ENCODE measurements at regions of chr7 and their contacts with region 1.

Region 1: DNA sequence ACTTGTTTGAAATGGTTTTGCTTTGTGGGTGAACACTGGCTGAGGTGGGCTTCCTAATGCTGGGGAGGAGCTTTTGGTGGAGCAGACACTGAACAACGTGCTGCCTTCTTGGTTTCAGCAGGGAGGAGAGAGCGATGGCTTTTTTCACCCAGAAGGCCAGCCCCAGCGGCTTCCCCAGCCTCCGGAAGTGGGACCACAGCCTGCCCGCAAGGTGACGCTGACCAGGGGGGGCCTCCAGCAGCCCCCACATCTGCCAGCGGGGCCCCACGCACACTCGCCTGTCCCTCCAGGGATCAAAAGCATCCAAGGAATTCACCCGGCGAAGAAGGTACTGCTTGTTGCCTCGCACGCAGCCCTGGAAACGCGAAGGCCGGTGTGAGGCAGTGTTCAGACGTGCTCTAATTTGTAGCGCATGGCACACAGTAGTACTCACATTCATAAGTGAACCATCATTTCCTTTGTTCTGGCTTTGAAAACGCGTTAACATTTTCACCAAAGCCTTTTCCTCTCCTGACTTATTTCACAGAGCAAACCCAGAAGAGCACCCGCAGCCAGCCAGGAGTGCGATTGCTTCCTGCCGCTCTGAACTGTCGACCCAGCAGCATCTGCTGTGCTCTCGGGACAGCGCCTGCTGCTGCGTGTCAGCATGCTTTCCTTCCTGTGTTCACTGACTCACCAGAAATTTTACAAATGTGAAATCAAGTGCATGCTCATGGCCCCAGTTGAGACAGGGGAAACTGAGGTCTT is 48.4 kb downstream of the SHH start:
- DNase-seq: peak in 1 of 4 donors; percentile 33
- ATAC-seq: peak; percentile 41
- H3K4me3 ChIP-seq: no peak overlapping the region
- H3K27ac ChIP-seq: no peak overlapping the region
- H3K4me1 ChIP-seq: no peaks in the 10 kb centered on the region
- H3K27me3 ChIP-seq: no peaks in the 10 kb centered on the region
- CTCF ChIP-seq: no peak
- POLR2A ChIP-seq: no peak

Region 2: DNA sequence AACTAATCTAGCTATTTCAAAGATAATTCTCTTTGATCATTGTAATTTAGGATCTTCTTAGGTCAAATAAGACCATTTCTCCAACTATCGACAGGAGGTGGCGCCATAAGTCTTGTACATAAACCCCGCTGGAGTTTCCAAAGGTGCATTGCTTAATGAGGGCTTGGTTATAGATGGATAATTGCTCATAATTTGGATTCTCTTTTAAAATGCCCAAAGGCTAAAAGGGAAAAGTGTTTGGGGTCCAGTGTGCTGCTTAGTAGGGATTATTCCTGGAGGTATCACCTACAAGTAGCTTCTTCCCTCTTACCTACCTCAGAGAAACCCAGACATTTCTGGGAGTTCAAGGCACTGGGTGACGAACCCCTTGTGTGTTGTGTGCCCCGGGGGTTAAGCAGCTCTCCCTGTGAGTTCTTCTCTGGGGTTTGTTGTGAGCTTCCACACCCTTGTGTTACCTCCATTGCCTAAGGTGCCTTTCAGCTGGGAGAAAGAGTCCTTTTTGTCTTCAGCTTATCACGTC is 836.2 kb before region 1 on chr7:
- intact Hi-C with region 1: loop called (anchors 10 kb)
- DNase-seq: peak; percentile 85 to 92 (median 89)
- ATAC-seq: peak; percentile 77
- H3K4me3 ChIP-seq: peak overlapping the region; percentile 20 to 67
- H3K27ac ChIP-seq: peak overlapping the region; percentile 59 to 85 (median 82)
- H3K4me1 ChIP-seq: peaks cover 7% of the 10 kb centered on the region
- H3K27me3 ChIP-seq: no peaks in the 10 kb centered on the region
- CTCF ChIP-seq: peak; percentile 19 to 76 (median 67)
- POLR2A ChIP-seq: no peak

Region 3: GRCh38 chr7:155380221-155380861 is 383.5 kb before region 1 on chr7:
- intact Hi-C with region 1: loop called (anchors 10 kb)
- DNase-seq: peak; percentile 80 to 84 (median 82)
- ATAC-seq: peak; percentile 90
- H3K4me3 ChIP-seq: no peak overlapping the region
- H3K27ac ChIP-seq: no peak overlapping the region
- H3K4me1 ChIP-seq: peaks cover 44% of the 10 kb centered on the region
- H3K27me3 ChIP-seq: peaks cover 4 to 58% of the 10 kb centered on the region in 2 donors
- CTCF ChIP-seq: peak; percentile 61 to 82 (median 78)
- POLR2A ChIP-seq: no peak

Region 4: DNA sequence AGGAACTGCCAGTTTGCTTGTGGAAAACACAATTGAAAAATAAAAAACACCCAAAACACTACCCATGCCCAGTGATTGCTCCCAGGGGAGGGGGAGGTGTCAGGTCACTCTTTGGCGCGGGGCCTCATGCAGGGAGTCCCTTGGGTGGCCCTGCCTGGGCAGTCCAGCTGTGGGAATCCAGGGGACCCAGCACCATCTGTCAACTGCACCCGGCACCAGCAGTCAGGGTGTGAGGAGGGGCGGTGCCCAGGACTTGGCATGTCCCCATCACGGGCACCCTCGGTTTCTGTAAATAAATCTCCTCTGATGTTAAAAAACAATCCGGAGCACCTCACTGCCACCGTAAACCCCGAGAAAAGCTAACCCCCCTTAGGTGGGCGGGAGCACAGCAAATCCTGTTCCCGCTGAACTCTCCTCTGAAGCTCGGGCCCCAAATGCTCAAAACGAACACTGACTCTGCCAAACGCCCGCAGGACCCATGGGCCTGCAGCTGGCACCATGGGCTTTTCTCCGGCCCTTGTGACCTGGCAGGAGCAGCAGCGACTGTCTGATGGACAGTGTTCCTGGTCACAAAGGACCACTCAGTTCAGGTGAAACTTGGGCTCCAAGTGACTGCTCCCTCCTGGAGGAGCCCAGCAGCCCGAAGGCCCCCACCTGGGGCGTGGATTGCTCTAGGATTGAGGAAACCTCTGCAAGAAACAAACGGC is 324.4 kb before region 1 on chr7:
- intact Hi-C with region 1: no loop called
- DNase-seq: peak in 1 of 4 donors; percentile 17
- ATAC-seq: no peak
- H3K4me3 ChIP-seq: no peak overlapping the region
- H3K27ac ChIP-seq: no peak overlapping the region
- H3K4me1 ChIP-seq: no peaks in the 10 kb centered on the region
- H3K27me3 ChIP-seq: peaks cover 0 to 4% of the 10 kb centered on the region in 2 donors
- CTCF ChIP-seq: no peak
- POLR2A ChIP-seq: no peak

Region 5: DNA sequence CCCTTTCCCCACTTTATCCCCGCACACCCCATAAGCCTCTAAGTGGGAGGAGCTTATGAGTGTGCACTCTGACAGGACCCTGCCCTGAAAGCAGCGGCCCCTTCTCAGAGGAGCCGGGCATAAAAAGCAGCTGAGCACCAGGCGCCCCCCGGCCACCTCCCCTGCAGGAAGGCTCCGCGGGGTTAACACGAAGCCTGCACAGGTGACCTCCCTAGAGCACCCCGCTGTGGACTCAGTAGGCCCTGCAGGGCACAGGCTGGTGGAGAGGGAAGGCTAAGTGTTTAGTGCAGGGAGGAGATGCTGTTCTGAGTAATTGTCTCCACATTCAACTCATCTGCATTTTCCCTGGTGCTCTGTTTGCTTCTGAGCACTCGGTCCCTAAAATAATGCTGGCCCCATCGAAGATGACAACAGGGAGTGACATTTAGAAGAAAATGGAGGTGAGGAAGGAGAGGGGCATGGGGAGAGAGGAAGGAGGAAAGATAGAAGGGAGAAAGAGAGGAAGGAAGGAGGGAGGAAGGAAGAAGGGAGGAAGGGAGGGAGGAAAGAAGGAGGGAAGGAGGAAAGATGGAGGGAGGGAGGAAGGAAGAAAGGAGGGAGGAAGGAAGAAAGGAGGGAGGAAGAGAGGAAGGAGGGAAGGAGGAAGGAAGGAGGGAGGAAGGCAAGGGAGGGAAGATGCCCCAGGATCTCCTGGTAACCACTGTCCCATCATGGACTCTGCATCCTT is 192.1 kb before region 1 on chr7:
- intact Hi-C with region 1: no loop called
- DNase-seq: no peak
- ATAC-seq: no peak
- H3K4me3 ChIP-seq: no peak overlapping the region
- H3K27ac ChIP-seq: no peak overlapping the region
- H3K4me1 ChIP-seq: peaks cover 6% of the 10 kb centered on the region
- H3K27me3 ChIP-seq: no peaks in the 10 kb centered on the region
- CTCF ChIP-seq: no peak
- POLR2A ChIP-seq: no peak

Region 6: GRCh38 chr7:155824227-155824886 is 60.5 kb after region 1 on chr7:
- intact Hi-C with region 1: no loop called
- DNase-seq: peak in 1 of 4 donors; percentile 33
- ATAC-seq: peak; percentile 42
- H3K4me3 ChIP-seq: no peak overlapping the region
- H3K27ac ChIP-seq: no peak overlapping the region
- H3K4me1 ChIP-seq: no peaks in the 10 kb centered on the region
- H3K27me3 ChIP-seq: no peaks in the 10 kb centered on the region
- CTCF ChIP-seq: no peak
- POLR2A ChIP-seq: no peak

Region 7: DNA sequence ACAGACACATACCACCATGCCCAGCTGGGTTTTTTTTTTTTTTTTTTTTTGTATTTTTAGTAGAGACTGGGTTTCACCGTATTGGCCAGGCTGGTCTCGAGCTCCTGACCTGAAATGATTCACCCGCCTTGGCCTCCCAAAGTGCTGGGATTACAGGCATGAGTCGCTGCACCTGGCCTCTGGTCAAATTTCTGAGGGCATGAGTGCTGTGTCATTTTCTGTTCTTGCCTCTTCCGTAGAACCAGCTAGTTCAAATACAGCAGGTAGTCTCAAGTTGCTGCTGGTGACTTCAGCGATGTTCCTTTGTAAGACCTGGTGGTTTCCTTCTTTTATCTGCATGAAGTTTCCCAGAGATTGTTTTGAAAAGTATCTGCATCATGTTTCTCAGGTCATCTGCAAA is 183.2 kb after region 1 on chr7:
- intact Hi-C with region 1: no loop called
- DNase-seq: no peak
- ATAC-seq: no peak
- H3K4me3 ChIP-seq: no peak overlapping the region
- H3K27ac ChIP-seq: no peak overlapping the region
- H3K4me1 ChIP-seq: no peaks in the 10 kb centered on the region
- H3K27me3 ChIP-seq: no peaks in the 10 kb centered on the region
- CTCF ChIP-seq: no peak
- POLR2A ChIP-seq: no peak

Measured in body of pancreas (tissue), 4 donors.